HCT116 (cell line): ENCODE measurements at regions of chr16 and their contacts with region 1.

Region 1: GRCh38 chr16:1932050-1933028 is 10.7 kb downstream of the MSRB1 start:
- DNase-seq: no peak
- ATAC-seq: peak; percentile 61
- H3K4me3 ChIP-seq: no peak overlapping the region
- H3K27ac ChIP-seq: peak overlapping the region; percentile 36; the same call in 1 of the 2 replicates
- H3K4me1 ChIP-seq: peaks cover 23 to 33% of the 10 kb centered on the region in 2 experiments
- H3K27me3 ChIP-seq: no peaks in the 10 kb centered on the region
- CTCF ChIP-seq: peak; percentile 42 to 55 (median 45); a peak in 4 of 6 replicates
- POLR2A ChIP-seq: no peak
- RAD21 ChIP-seq: peak; percentile 66

Region 2: DNA sequence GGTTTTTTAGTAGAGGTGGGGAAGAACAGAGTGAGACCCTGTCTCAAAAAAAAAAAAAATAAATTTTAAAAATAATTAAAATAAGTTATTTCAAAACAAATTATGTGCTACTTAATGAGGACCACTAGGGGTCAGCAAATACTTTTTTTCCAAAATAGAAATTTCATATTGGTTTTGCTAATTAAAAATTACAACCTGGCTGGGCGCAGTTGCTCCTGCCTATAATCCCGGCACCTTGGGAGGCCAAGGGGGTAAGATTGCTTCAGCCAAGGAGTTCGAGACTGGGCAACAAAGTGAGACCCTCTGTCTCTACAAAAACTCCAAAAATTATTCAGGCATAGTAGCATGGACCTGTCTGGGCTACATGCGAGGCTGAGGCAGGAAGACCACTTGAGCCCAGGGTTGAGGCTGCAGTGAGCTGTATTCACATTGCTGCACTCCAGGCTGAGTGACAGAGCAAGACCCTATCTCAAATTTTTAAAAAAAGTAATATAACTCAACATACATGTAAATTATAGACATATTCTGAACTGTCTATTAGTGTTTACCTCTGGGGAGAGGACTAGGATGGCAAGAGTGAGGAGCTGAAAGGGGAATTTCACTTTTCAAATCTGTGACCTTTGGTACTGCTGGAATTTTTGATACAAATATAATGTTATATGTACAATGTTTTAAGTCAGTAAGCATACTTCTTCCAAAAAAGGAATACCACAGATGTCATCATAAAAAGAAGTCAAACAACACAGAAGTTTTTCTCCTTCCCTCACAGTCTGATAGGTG is 68.5 kb before region 1 on chr16:
- CTCF ChIA-PET with region 1: interaction called, 6 read pairs
- POLR2A ChIA-PET with region 1: interaction called, 3 read pairs
- RAD21 ChIA-PET with region 1: interaction called, 3 to 4 read pairs
- intact Hi-C with region 1: loop called (anchors 1 kb)
- DNase-seq: peak; percentile 40
- ATAC-seq: peak; percentile 65
- H3K4me3 ChIP-seq: no peak overlapping the region
- H3K27ac ChIP-seq: no peak overlapping the region
- H3K4me1 ChIP-seq: peaks cover 11% of the 10 kb centered on the region in 2 experiments; a peak in 3 of 4 replicates
- H3K27me3 ChIP-seq: no peaks in the 10 kb centered on the region
- CTCF ChIP-seq: peak; percentile 33 to 90 (median 42); a peak in 4 of 6 replicates
- POLR2A ChIP-seq: no peak
- RAD21 ChIP-seq: peak; percentile 82